Mammary epithelial cell (primary cell): ENCODE measurements at regions of chr2 and their contacts with region 1.

Region 1: DNA sequence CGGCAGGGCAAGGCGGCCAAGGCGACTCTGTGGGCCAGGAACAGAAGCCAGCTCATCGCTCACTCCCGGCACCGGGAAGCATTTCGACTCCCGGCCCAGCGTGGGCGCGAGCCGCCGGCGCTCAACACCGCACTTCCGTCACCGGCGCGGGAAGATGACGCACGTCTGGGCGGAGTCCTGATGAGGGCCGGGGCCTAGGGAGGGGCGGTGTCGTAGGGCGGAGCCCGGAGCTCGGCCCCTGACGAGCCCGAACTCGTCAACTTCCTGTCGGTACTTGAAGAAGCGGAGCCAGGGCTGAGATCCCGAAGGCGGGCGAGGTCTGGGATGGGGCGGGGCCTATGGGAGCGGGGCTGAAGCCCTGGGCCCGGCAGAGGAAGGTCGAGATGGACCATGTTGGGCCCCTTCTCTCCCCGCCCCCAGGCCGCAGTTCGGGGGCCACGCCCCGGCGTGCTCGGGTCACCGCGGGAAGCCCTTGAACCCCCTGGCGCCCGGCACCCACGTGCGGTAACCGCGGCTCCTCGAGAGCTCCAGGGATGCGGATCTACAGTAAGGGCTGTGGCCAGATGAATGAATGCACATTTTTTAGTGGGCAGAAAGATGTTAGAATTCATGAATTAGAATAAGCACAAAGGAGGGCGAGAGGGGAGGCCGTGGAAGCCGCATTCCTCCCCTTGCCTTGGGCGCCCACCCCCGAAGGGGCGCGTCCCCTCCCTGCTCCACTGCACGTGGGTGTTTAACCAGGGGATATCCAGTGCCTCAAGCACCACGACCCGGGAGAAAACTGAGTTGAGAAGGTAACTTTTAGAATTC is at the start of gene RNASEH1:
- DNase-seq: peak; percentile 98
- H3K4me3 ChIP-seq: peak within 1 kb of the TSS; percentile 81 to 86 (median 83)
- H3K27ac ChIP-seq: peak within 1 kb of the TSS; percentile 74
- H3K4me1 ChIP-seq: peaks cover 10% of the 10 kb centered on the region
- H3K27me3 ChIP-seq: no peaks in the 10 kb centered on the region
- CTCF ChIP-seq: no peak
- total RNA-seq, gene RNASEH1: 29.2 to 33.7 TPM

Region 2: DNA sequence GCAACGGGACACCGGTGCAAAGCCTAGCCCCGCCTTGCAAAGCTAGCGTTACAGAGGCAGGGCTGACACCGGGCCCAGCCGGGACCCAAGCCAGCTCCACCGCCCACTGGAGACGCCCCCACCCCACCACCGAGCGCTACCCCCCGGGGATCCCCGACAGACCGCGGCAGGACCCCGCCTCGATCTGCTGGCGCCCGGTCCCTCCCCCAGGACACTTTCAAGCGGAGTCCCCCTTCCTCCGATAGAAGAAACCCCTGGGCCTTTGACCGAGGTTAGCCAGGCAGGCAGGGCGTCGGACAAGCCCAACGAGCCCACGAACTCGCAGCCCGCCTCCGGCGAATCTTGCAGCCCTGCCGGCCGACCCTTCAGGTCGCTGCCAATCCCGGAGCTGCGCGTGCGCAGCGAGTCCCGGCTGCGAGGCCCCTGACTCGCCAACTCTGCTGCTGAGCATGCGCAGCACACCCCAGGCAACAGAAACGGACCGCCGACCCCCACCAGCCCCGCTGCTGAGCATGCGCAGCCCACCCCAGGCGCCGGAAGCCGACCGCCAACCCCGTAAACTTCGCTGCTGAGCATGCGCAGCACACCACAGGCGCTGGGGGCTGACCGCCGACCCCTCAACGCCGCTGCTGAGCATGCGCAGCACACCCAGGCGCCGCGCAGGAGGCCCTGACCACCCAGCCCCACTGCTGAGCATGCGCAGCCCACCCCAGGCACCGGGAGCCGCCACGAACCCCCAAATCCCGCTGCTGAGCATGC is 39.7 kb before region 1 on chr2:
- CTCF ChIA-PET with region 1: no interaction called
- dilution Hi-C with region 1: no loop called
- in situ Hi-C with region 1: no loop called
- intact Hi-C with region 1: loop called (anchors 1 kb)
- DNase-seq: peak; percentile 95
- H3K4me3 ChIP-seq: peak overlapping the region; percentile 63 to 92 (median 80)
- H3K27ac ChIP-seq: peak overlapping the region; percentile 61
- H3K4me1 ChIP-seq: peaks cover 12% of the 10 kb centered on the region
- H3K27me3 ChIP-seq: no peaks in the 10 kb centered on the region
- CTCF ChIP-seq: no peak

Region 3: GRCh38 chr2:4391013-4391412 is 832.6 kb after region 1 on chr2:
- CTCF ChIA-PET with region 1: no interaction called
- dilution Hi-C with region 1: no loop called
- in situ Hi-C with region 1: no loop called
- intact Hi-C with region 1: no loop called
- DNase-seq: no peak
- H3K4me3 ChIP-seq: no peak overlapping the region
- H3K27ac ChIP-seq: no peak overlapping the region
- H3K4me1 ChIP-seq: no peaks in the 10 kb centered on the region
- H3K27me3 ChIP-seq: no peaks in the 10 kb centered on the region
- CTCF ChIP-seq: no peak